ENCODE measurements at regions of chr7 and their contacts with region 1.

Region 1: GRCh38 chr7:99504603-99505323 is at the start of gene ZKSCAN5:
- DNase-seq: peak; percentile 91 to 99
- H3K4me3 ChIP-seq: peak within 1 kb of the TSS; percentile 75 to 94
- H3K27ac ChIP-seq: peak within 1 kb of the TSS; percentile 83 to 97
- H3K4me1 ChIP-seq: peaks cover 9 to 27% of the 10 kb centered on the region in 2 donors
- H3K27me3 ChIP-seq: no peaks in the 10 kb centered on the region
- CTCF ChIP-seq: no peak
- total RNA-seq, gene ZKSCAN5: 4.4 TPM

Region 2: DNA sequence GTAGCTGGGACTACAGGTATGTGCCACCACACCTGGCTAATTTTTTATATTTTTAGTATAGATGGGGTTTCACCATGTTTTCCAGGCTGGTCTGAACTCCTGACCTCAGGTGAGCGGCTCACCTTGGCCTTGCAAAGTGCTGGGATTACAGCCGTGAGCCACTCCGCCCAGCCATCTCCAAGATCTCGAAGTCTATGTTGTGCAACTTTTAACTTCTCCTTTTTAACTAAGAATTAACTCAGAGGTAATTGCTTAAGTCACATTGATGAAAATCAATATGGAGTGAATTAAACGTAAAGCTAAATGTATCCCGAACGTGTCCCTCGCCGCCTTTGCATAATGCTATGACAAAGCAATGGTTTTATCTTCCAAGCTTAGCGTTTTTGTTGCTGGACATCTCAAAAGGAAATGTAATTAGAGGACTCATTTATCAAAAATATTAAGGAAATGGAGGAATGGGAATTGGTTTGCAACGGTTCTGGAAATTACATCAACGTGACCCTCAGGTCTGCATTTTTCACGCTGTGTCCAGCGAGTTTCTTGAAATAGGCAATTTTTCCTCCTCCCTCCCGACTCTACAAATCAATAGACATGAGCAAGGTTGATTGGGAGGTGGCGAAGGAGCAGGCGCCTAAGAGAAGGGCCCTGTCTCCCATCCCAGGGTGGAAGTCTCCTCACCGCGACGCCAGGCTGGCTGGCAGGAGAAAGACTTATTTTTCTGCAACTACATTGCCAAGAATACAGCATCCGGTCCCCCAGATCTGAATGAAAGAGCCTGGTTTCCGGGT is 724.8 kb before region 1 on chr7:
- intact Hi-C with region 1: no loop called
- DNase-seq: no peak
- H3K4me3 ChIP-seq: no peak overlapping the region
- H3K27ac ChIP-seq: no peak overlapping the region
- H3K4me1 ChIP-seq: no peaks in the 10 kb centered on the region
- H3K27me3 ChIP-seq: no peaks in the 10 kb centered on the region
- CTCF ChIP-seq: no peak

Region 3: DNA sequence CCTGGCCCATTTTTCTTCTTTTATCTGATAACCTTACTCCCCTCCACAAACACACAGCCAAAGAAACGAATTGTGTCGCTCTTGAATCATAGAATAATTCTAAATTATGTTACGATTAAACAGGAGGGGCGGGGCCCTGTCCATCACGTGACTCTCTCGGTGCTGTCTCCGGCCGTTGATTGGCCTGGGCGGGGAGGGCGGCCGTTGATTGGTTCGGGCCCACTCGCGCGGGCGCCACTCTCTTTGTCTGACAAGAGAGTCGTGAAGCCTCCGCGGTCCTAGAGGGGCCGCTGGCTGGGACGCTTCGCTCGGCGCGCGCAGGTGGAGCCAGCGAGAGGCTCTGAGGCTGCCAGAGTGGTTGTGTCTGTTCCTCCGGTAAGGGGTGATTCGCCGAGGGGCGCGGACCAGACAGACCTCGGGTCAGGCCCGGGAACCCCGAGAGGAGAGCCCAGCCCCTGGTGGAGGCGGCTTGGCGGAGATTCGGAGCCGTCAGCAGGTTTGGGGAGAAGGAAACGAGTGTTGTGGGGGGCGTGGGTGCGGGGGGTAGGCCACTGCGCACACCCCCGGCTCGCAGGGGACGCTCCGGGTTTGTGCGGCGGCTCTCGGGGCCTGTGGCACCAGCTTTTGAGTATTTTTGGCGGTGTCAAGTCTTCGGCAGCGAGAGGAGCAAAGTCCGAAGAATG is 32.1 kb before region 1 on chr7 and contains the start of gene ZNF789:
- intact Hi-C with region 1: loop called (anchors 1 kb)
- DNase-seq: peak; percentile 94 to 99
- H3K4me3 ChIP-seq: peak within 1 kb of the TSS; percentile 61 to 95
- H3K27ac ChIP-seq: peak within 1 kb of the TSS; percentile 83 to 86
- H3K4me1 ChIP-seq: peaks cover 0 to 14% of the 10 kb centered on the region in 2 donors
- H3K27me3 ChIP-seq: no peaks in the 10 kb centered on the region
- CTCF ChIP-seq: no peak
- total RNA-seq, gene ZNF789: 4.2 TPM

Region 4: GRCh38 chr7:99551767-99552463 is 47.2 kb after region 1 on chr7 and contains the start of gene FAM200A:
- intact Hi-C with region 1: loop called (anchors 2 kb)
- DNase-seq: peak; percentile 15 to 92
- H3K4me3 ChIP-seq: peak within 1 kb of the TSS; percentile 94 to 97
- H3K27ac ChIP-seq: peak within 1 kb of the TSS; percentile 74 to 88
- H3K4me1 ChIP-seq: peaks cover 6 to 11% of the 10 kb centered on the region in 2 donors
- H3K27me3 ChIP-seq: no peaks in the 10 kb centered on the region
- CTCF ChIP-seq: no peak
- total RNA-seq, gene FAM200A: 0.64 TPM

Region 5: DNA sequence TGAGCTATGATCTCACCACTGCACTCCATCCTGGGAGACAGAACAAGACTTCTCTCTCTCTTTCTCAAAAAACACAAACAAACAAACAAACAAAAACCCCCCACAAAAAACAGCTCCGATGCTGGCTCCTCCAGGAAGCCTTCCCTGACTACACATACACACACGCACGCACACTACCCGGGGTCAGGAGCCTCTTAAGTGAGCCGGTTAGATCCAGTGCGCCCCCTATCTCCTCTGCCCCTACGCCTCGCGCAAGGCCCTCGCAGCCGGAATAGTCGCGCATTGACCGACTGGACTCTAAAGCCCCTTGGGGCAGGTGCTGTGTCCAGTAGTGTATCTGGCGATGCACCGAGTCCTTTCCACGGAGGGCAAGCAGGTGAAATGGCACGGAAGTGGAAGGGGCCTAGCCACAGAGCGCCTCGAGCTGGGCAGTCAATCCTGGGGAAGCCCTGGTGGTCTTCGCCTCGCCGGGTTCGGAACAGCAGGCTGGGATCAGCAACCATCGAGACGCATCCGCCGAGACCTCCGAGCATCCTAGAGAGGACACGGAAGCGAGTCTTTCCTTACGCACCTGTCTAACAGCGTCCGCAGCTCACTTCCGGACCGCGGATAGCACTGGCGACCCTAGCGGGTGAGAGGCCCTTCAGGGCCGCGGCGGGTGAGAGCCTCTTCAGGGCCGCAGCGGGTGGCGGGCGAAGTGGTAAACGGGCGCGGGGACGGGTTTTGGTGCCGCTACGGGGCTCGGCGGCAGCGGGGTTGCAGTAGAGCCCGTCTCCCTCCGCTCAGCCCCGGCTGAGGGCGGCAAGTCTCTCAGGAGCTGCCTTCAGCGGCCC is 111.8 kb after region 1 on chr7 and contains the start of gene ZSCAN25:
- intact Hi-C with region 1: loop called (anchors 2 kb)
- DNase-seq: peak; percentile 46 to 91
- H3K4me3 ChIP-seq: peak within 1 kb of the TSS; percentile 94 to 95
- H3K27ac ChIP-seq: peak within 1 kb of the TSS; percentile 87 to 88
- H3K4me1 ChIP-seq: peaks cover 0 to 6% of the 10 kb centered on the region in 2 donors
- H3K27me3 ChIP-seq: no peaks in the 10 kb centered on the region
- CTCF ChIP-seq: peak in 2 of 3 experiments; percentile 29 to 31
- total RNA-seq, gene ZSCAN25: 10.3 TPM

Region 6: GRCh38 chr7:100393233-100393905 is 888.6 kb after region 1 on chr7:
- intact Hi-C with region 1: no loop called
- DNase-seq: no peak
- H3K4me3 ChIP-seq: no peak overlapping the region
- H3K27ac ChIP-seq: no peak overlapping the region
- H3K4me1 ChIP-seq: no peaks in the 10 kb centered on the region
- H3K27me3 ChIP-seq: no peaks in the 10 kb centered on the region
- CTCF ChIP-seq: no peak